Breast epithelium (tissue), 4 donors: ENCODE measurements at regions of chr17 and their contacts with region 1.

Region 1: GRCh38 chr17:49327835-49328784 is 33.9 kb downstream of the ZNF652 start:
- DNase-seq: no peak
- H3K4me3 ChIP-seq: no peak overlapping the region
- H3K27ac ChIP-seq: no peak overlapping the region
- H3K4me1 ChIP-seq: no peaks in the 10 kb centered on the region
- H3K27me3 ChIP-seq: no peaks in the 10 kb centered on the region
- CTCF ChIP-seq: no peak
- POLR2A ChIP-seq: no peak

Region 2: DNA sequence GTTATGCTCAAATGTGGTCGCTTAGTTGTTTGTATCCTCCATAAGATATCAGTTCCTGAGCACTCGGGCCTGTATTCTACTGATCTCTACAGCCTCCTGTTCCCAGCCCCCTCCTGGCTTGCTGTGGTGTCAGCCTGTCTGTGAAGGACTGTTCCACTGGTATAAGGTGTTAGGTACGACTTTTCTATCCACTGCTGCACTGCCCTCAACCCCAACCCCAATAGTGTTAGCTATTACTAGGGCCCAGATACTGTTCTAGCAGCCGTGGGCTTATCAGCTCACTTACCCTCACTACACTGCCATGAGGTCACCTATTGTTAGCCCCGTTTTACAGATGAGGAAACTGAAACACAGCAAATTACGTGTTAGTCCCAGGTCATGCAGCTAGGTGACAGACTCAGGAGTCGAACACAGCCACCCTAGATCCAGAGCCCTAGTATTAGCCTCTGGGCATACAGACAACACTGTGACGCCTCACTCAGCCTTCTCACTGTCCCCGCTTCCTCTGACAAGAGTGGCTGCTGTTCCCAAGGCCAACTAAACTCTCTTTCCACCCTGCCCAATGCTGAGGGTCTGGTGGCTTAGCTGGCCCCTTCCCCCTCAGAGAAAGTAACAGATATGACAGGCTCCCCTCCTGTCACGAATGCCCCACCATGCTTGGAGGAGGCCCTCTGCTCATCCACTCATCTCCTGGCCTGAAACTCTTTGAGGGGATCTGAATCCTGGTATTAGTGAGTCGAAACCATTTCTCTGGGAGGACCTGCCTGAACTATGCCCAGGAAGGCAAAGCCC is 59.6 kb after region 1 on chr17:
- intact Hi-C with region 1: loop called (anchors 2 kb)
- DNase-seq: no peak
- H3K4me3 ChIP-seq: no peak overlapping the region
- H3K27ac ChIP-seq: peak overlapping the region; percentile 43 to 45
- H3K4me1 ChIP-seq: peaks cover 4 to 30% of the 10 kb centered on the region in 2 donors
- H3K27me3 ChIP-seq: no peaks in the 10 kb centered on the region
- CTCF ChIP-seq: no peak
- POLR2A ChIP-seq: no peak

Region 3: DNA sequence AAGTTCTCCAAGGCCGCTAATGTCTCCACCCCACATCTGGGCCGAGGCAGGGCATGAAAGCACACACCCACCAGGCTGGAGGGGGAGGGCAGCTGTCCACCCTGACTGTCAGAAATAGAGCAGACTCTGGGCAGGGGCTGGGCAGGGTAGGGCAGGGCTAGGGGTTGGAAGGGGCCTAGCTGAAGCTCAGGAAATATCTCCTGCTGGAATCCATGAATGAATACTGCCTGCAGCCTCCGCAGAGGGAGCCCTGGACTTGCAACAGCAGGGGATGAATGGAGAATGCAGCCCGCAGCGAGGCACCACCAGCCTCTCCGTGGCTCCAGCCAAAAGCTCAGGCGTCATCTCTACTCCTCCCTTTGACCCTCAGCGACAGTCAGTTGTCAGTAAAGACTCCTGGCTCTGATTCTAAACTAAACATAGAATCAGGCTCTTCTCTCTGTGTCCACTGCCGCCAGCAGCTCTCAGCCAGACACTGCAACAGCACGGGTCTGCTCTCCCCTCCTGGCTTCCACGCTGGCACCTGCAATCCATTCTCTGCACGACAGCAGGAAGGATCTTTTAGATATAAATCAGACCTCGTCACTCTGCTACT is 143.1 kb after region 1 on chr17:
- intact Hi-C with region 1: no loop called
- DNase-seq: no peak
- H3K4me3 ChIP-seq: no peak overlapping the region
- H3K27ac ChIP-seq: no peak overlapping the region
- H3K4me1 ChIP-seq: no peaks in the 10 kb centered on the region
- H3K27me3 ChIP-seq: peaks cover 0 to 31% of the 10 kb centered on the region in 2 donors
- CTCF ChIP-seq: no peak
- POLR2A ChIP-seq: no peak